Naive thymus-derived CD8-positive, alpha-beta T cell (primary cell): ENCODE measurements at regions of chr19 and their contacts with region 1.

Region 1: DNA sequence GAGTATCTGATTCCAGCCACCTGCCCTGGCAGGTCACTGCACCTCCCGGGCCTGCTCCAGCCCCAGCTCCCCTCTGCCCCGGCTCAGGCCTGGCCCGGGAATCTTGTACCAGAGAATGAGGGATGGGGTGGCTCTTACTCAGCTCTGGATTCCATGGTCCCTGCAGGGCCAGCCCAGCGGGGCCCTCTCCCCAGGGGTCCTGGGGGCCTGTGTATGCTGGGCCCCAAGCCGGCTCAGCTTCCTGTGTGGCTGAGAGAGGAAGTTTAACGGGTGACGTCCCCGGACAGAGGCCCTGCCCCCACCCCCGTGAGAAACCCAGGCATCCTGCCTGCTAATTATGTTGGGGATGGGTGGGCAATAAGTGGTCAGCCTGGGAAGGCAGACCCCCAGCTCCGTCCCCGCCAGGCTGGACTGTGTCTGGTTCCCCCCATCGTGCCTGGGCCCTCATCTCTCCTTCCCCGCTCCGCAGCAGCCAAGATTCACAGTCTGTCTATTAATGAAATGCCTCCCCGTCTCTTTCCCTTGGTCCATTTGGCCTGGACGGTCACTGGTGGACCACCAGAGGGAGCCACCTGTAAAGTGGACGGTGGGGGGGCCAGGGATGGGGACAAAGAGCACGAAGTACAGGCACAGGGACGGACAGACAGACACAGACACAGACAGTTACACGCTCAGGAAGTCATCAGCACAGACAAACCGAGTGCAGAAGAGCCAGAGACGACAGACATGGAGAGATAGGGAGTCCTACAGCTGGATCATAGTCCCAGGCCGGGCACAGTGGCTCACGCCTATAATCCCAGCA is at the start of gene DENND1C:
- DNase-seq: peak; percentile 27 to 81 (median 58)
- ATAC-seq: peak; percentile 86 to 88
- H3K4me3 Mint-ChIP-seq: peak within 1 kb of the TSS; percentile 84 to 100 (median 98)
- H3K27ac Mint-ChIP-seq: peak within 1 kb of the TSS; percentile 93 to 100 (median 98)
- H3K4me1 Mint-ChIP-seq: peaks cover 20 to 46% (median 44%) of the 10 kb centered on the region in 4 donors
- H3K27me3 Mint-ChIP-seq: no peaks in the 10 kb centered on the region
- polyA plus RNA-seq, gene DENND1C: 35.4 to 106 (median 67.7) TPM

Region 2: DNA sequence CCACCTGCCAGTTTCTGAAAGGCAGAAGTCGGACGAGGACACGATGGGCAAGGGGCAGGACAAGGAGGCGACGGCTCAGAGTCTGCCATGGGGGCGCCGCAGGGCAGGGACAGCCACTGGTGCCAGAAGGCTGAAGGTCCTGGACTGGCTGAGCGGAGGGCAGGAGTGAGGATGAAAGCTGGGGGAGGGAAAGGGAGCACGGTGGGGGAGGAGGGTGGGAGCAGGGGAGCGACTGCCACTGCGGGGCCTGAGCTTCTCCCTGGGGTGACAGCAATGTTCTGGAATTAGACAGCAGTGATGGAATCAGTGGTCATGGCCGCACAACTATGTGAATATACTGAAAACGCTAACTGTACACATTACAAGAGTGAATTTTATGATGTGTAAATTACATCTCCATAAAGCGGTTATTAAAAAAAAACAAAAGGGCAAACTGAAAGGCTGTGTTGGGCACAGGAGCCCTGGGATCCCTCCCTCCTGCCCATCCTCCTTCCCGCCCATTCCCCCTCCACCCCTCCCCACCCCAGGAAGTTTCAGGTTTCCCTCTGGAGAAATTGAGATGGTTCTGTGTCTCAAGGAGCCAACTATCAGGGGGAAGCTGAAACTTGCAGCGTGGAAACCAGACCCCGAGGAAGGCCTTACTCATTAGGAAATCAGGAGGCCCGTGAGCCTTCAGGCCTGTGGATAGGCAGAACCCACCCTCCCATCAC is 217.9 kb before region 1 on chr19:
- POLR2A ChIA-PET with region 1: no interaction called
- DNase-seq: no peak
- ATAC-seq: no peak
- H3K4me3 Mint-ChIP-seq: no peak overlapping the region
- H3K27ac Mint-ChIP-seq: peak overlapping the region in 8 of 10 donors; percentile 15 to 93 (median 78)
- H3K4me1 Mint-ChIP-seq: peaks cover 9 to 52% (median 28%) of the 10 kb centered on the region in 4 donors
- H3K27me3 Mint-ChIP-seq: no peaks in the 10 kb centered on the region

Region 3: GRCh38 chr19:6450166-6450565 is 31.6 kb before region 1 on chr19:
- POLR2A ChIA-PET with region 1: no interaction called
- DNase-seq: no peak
- ATAC-seq: no peak
- H3K4me3 Mint-ChIP-seq: no peak overlapping the region
- H3K27ac Mint-ChIP-seq: peak overlapping the region in 1 of 10 donors; percentile 52
- H3K4me1 Mint-ChIP-seq: peaks cover 0 to 4% (median 0%) of the 10 kb centered on the region in 4 donors
- H3K27me3 Mint-ChIP-seq: no peaks in the 10 kb centered on the region

Region 4: GRCh38 chr19:6501740-6502648 is 20.3 kb after region 1 on chr19 and contains the start of gene TUBB4A:
- POLR2A ChIA-PET with region 1: interaction called, 10 read pairs
- DNase-seq: peak in 8 of 10 donors; percentile 24 to 68 (median 38)
- ATAC-seq: peak; percentile 44 to 71
- H3K4me3 Mint-ChIP-seq: peak within 1 kb of the TSS; percentile 85 to 96 (median 90)
- H3K27ac Mint-ChIP-seq: peak within 1 kb of the TSS in 9 of 10 donors; percentile 43 to 90 (median 75)
- H3K4me1 Mint-ChIP-seq: peaks cover 5 to 29% (median 21%) of the 10 kb centered on the region in 4 donors
- H3K27me3 Mint-ChIP-seq: peaks cover 0 to 5% (median 0%) of the 10 kb centered on the region in 5 donors
- polyA plus RNA-seq, gene TUBB4A: 2.8 to 7.3 (median 5.2) TPM

Region 5: GRCh38 chr19:6530386-6531161 is 48.8 kb after region 1 on chr19 and contains the start of gene TNFSF9:
- POLR2A ChIA-PET with region 1: no interaction called
- DNase-seq: peak; percentile 55 to 86 (median 72)
- ATAC-seq: peak; percentile 76 to 86
- H3K4me3 Mint-ChIP-seq: peak within 1 kb of the TSS; percentile 72 to 93 (median 90)
- H3K27ac Mint-ChIP-seq: peak within 1 kb of the TSS; percentile 53 to 84 (median 75)
- H3K4me1 Mint-ChIP-seq: peaks cover 32 to 47% (median 43%) of the 10 kb centered on the region in 4 donors
- H3K27me3 Mint-ChIP-seq: peaks cover 14 to 36% (median 33%) of the 10 kb centered on the region in 5 donors
- polyA plus RNA-seq, gene TNFSF9: 0.25 to 0.54 TPM in 2 of 3 donors, not detected in the other